Right ventricle myocardium inferior (tissue), 1 donor: ENCODE measurements at regions of chr1 and their contacts with region 1.

Region 1: GRCh38 chr1:183915625-183916510 is 110.9 kb downstream of the RGL1 start:
- DNase-seq: no peak
- ATAC-seq: peak; percentile 75

Region 2: GRCh38 chr1:183655562-183656075 is 260.2 kb before region 1 on chr1:
- intact Hi-C with region 1: loop called (anchors 1 kb)
- DNase-seq: peak; percentile 72
- ATAC-seq: peak; percentile 76

Region 3: GRCh38 chr1:183685112-183685713 is 230.7 kb before region 1 on chr1:
- intact Hi-C with region 1: loop called (anchors 10 kb)
- DNase-seq: no peak
- ATAC-seq: no peak

Region 4: DNA sequence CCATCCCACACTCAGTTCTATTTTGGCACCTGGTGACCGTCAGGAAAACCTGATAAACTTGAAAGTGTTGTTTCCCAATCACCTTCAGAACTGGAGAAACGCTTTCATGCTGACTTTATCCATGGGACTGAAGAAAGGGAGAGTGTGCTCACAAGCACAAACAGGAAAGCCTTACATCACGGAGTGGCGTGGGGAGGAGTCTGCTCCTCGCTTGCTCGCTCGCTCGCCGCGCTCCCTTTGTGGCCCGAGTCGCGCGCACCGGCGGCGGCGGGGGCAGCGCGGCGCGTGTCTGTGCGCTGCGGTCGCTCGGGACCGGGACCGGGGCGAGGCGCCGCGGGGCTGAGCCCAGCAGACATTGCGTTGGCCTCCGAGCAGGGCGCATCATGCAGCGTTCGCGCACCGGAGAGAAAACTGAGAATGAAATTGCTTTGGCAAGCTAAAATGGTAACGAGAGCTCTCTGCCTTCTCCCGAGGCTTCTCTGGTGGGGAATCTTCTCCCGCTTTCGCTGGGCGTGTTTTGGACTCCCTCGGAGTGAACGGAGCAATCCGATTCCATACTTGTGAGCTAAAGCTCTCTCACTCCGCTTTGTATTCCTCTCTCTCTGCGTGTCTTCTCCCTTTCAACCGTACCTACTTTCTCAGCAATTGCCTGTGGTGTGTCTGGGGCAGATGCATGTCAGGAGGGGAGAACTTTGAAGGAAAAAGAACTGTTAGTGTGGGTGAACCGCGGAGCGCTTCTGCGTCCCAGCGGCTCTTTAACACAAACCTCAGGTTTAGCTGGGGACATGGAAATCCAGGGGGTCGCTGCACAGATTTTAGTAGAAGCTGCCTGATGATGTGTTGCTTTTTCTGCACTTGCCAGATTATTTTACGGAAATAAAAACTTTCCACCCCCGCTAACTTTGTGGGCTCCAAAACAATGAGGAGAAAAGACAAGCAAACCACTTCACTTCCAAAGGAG is 110.7 kb before region 1 on chr1 and contains the start of gene RGL1:
- intact Hi-C with region 1: loop called (anchors 10 kb)
- DNase-seq: peak; percentile 83
- ATAC-seq: peak; percentile 93
- total RNA-seq, gene RGL1: 18.9 TPM

Region 5: GRCh38 chr1:183932412-183932811 is 16.5 kb after region 1 on chr1:
- intact Hi-C with region 1: no loop called
- DNase-seq: peak; percentile 93
- ATAC-seq: peak; percentile 91

Region 6: GRCh38 chr1:184051485-184052193 is 135.8 kb after region 1 on chr1 and contains the start of gene TSEN15:
- intact Hi-C with region 1: no loop called
- DNase-seq: peak; percentile 91
- ATAC-seq: peak; percentile 99
- total RNA-seq, gene TSEN15: 26.4 TPM